Prostate gland (tissue), 2 donors: ENCODE measurements at regions of chr5 and their contacts with region 1.

Region 1: GRCh38 chr5:169701910-169702451 is 64.9 kb downstream of the DOCK2 start:
- DNase-seq: no peak
- H3K4me3 ChIP-seq: no peak overlapping the region
- H3K27ac ChIP-seq: no peak overlapping the region
- H3K4me1 ChIP-seq: no peaks in the 10 kb centered on the region
- H3K27me3 ChIP-seq: peaks cover 3% of the 10 kb centered on the region
- CTCF ChIP-seq: peak in 3 of 4 experiments; percentile 46 to 58 (median 57)
- POLR2A ChIP-seq: no peak

Region 2: DNA sequence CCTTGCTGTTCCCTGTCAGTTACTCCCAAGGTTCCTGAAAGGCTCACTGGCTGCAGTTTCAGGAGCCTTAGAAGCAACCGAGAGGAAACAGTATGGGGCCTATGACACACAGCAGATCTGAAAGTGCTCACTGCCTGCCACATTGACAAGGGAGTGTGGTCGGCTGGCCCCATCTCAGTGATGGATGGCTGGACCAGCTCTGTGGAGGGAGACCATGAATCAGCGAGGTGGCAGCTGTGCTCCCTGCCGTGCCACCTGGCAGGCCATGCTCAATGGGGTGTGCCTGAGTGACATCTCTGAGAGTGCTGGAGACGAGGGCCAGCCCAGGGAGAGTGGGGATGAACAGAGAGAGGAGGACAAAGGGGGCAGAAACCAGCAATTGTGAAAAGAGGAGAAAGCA is 15.8 kb before region 1 on chr5:
- intact Hi-C with region 1: no loop called
- DNase-seq: no peak
- H3K4me3 ChIP-seq: no peak overlapping the region
- H3K27ac ChIP-seq: no peak overlapping the region
- H3K4me1 ChIP-seq: no peaks in the 10 kb centered on the region
- H3K27me3 ChIP-seq: no peaks in the 10 kb centered on the region
- CTCF ChIP-seq: no peak
- POLR2A ChIP-seq: no peak

Region 3: DNA sequence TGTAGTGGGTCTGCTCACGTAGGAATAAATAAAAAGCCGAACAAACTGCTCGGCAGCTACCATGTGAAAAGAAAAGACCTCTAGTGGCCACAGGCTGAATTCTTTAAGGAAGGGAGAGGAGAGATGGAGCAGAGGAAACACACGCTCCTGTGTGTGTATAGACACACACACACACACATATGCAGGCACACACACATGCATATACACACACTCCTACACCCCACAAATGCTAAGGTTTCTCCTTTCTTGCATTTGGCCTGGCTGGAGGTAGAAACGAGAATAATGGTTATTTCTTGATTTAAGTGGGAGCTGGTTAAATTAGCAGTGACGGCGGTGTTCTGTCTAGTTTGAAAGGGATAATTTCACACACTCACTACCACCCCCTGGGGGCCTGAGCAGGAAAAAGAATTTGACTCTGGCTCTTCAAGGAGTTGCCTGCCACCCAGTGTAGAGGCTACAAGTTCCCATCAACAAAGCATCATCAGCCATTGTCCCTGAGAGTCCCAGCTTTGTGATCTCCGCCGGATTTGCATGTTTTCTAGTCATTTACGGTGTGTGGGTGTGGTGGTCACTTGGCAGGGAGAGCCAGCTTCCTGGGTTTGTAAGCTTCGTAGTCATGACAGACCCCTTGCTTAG is 278.6 kb after region 1 on chr5 and contains the start of gene INSYN2B:
- intact Hi-C with region 1: loop called (anchors 5 kb)
- DNase-seq: peak; percentile 71
- H3K4me3 ChIP-seq: peak within 1 kb of the TSS in 1 of 2 donors; percentile 13
- H3K27ac ChIP-seq: no peak within 1 kb of the TSS
- H3K4me1 ChIP-seq: no peaks in the 10 kb centered on the region
- H3K27me3 ChIP-seq: no peaks in the 10 kb centered on the region
- CTCF ChIP-seq: peak; percentile 47 to 76 (median 56)
- POLR2A ChIP-seq: no peak
- total RNA-seq, gene INSYN2B: 0.17 to 8.4 TPM